H1 (cell line): ENCODE measurements at regions of chr17 and their contacts with region 1.

Region 1: GRCh38 chr17:77471984-77472461 is 331.3 kb downstream of the SEC14L1 start:
- DNase-seq: no peak
- H3K4me3 ChIP-seq: peak overlapping the region in 1 of 4 experiments; percentile 17; a peak in 2 of 8 replicates
- H3K27ac ChIP-seq: peak overlapping the region; percentile 76
- H3K4me1 ChIP-seq: peaks cover 29 to 66% (median 45%) of the 10 kb centered on the region in 4 experiments
- H3K27me3 ChIP-seq: no peaks in the 10 kb centered on the region
- CTCF ChIP-seq: no peak
- EP300 ChIP-seq: no peak
- POLR2A ChIP-seq: no peak
- RAD21 ChIP-seq: no peak

Region 2: DNA sequence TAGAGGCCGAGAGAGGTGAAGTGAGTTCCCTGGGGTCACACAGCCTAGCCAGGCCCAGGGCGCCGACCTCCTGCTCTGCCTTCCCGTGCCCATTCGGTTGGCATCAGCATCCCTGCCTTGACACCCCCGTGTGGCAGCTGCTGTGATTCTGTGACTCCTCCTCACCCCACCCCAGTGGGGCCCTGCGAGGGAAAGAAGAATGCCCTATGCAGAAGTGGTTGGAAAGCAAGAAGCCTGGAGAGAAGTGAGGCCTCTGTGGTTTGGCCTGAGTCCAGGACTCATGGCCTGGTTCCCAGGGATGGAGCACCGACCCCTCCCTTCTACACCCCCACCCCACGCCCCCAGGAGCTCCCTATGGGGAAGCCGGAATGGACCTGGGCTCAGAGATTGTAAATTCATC is 35.0 kb before region 1 on chr17:
- CTCF ChIA-PET with region 1: interaction called, 12 read pairs
- POLR2A ChIA-PET with region 1: interaction called, 3 read pairs
- DNase-seq: no peak
- H3K4me3 ChIP-seq: no peak overlapping the region
- H3K27ac ChIP-seq: no peak overlapping the region
- H3K4me1 ChIP-seq: peaks cover 0 to 54% (median 36%) of the 10 kb centered on the region in 4 experiments; a peak in 6 of 7 replicates
- H3K27me3 ChIP-seq: no peaks in the 10 kb centered on the region
- CTCF ChIP-seq: no peak
- EP300 ChIP-seq: no peak
- POLR2A ChIP-seq: no peak
- RAD21 ChIP-seq: no peak